WTC11 (cell line): ENCODE measurements at regions of chr18 and their contacts with region 1.

Region 1: GRCh38 chr18:72672364-72673184 is 128.4 kb upstream of the CBLN2 start:
- DNase-seq: no peak
- ATAC-seq: peak; percentile 73; the same call in 1 of the 2 replicates
- H3K4me3 Mint-ChIP-seq: no peak overlapping the region
- H3K27ac Mint-ChIP-seq: no peak overlapping the region
- H3K4me1 Mint-ChIP-seq: no peaks in the 10 kb centered on the region
- H3K27me3 Mint-ChIP-seq: no peaks in the 10 kb centered on the region
- CTCF ChIP-seq: peak; percentile 56

Region 2: DNA sequence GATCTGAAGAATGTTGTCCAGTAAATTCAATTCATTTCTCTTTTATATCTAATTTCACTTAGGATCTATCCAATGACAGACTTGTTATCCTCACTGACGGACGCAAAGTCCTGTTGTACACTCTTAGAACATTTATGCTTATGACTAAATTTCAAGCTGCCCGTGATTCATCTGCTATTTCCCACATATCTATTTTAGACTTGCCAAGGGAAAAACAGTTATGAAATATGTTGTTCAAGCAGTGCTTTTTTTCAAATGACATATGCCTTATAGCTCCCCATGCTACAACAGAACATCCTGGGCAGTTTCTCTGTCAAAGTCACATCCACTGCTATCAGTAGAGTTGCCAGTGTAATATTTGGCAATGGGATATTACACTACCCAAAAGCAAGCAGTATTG is 34.2 kb before region 1 on chr18:
- CTCF ChIA-PET with region 1: no interaction called
- POLR2A ChIA-PET with region 1: no interaction called
- DNase-seq: no peak
- ATAC-seq: no peak
- H3K4me3 Mint-ChIP-seq: no peak overlapping the region
- H3K27ac Mint-ChIP-seq: no peak overlapping the region
- H3K4me1 Mint-ChIP-seq: peaks cover 7% of the 10 kb centered on the region
- H3K27me3 Mint-ChIP-seq: no peaks in the 10 kb centered on the region; the same call in 1 of the 2 replicates
- CTCF ChIP-seq: no peak

Region 3: GRCh38 chr18:72652990-72653593 is 19.5 kb before region 1 on chr18:
- CTCF ChIA-PET with region 1: interaction called, 18 read pairs
- POLR2A ChIA-PET with region 1: no interaction called
- DNase-seq: peak; percentile 77
- ATAC-seq: peak; percentile 88
- H3K4me3 Mint-ChIP-seq: no peak overlapping the region
- H3K27ac Mint-ChIP-seq: no peak overlapping the region
- H3K4me1 Mint-ChIP-seq: no peaks in the 10 kb centered on the region
- H3K27me3 Mint-ChIP-seq: peaks cover 4% of the 10 kb centered on the region
- CTCF ChIP-seq: peak; percentile 28; the same call in 1 of the 2 replicates